AG04450 (cell line): ENCODE measurements at regions of chr4 and their contacts with region 1.

Region 1: DNA sequence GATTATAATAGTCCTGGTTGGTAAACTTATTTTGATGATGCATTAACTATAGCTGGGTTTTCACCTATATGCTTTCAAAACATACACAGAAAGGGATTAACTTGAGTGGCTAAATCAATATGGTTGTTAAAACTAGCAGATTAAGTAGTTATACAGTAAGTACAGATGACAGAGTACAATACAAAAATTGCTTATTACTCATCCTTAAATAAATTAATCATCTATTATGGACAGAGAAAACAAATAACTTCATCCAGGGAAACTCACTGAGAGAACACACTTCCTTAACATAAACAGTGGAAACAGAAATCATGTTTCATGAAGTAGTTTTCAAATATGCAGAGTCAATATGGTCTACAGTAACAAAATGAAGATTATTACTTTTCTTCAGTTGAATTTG is 133.4 kb downstream of the AREG start:
- DNase-seq: no peak
- H3K4me3 ChIP-seq: no peak overlapping the region
- H3K27ac ChIP-seq: no peak overlapping the region
- H3K27me3 ChIP-seq: no peaks in the 10 kb centered on the region
- CTCF ChIP-seq: no peak

Region 2: DNA sequence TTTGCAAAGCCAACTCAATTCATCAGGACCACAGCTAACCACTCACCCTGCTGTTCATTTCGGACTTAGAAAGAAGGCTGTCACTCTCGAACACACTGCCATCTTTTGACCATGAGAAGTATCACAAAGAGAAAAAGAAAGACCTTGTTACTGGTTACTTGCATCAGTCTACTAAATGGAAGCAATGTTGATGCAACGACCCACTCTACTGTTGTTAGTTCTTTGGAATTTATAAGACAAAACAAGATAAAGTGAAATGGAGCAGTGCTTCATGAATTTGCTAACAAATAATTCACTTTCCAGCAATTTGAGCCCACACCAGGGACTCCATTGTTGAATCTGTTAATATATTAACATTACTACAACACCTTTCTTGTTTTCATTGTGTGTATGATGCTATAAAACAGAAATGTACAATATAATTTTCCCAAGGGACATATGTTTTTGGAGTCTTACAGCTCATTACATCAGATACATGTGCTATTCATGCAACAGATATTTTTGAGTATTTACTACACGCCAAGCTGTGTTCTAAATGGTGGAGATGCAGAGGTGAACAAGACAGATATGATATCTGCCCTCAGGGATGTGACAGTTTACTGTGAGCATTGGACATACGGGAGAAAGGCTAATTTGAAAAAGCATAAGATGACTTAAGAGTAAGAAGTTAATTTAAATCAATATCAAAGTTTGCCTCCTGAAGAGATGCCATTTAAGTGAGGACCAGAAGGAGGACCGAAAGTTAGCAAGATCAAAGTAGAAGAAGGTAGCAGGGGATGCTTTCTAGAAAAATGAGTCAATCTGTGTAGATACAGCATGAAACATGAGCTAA is 46.1 kb before region 1 on chr4:
- CTCF ChIA-PET with region 1: interaction called, 10 read pairs
- POLR2A ChIA-PET with region 1: no interaction called
- DNase-seq: peak; percentile 59
- H3K4me3 ChIP-seq: no peak overlapping the region
- H3K27ac ChIP-seq: no peak overlapping the region
- H3K27me3 ChIP-seq: no peaks in the 10 kb centered on the region
- CTCF ChIP-seq: peak; percentile 64

Region 3: GRCh38 chr4:74796631-74797030 is 218.3 kb after region 1 on chr4:
- CTCF ChIA-PET with region 1: no interaction called
- POLR2A ChIA-PET with region 1: no interaction called
- DNase-seq: no peak
- H3K4me3 ChIP-seq: no peak overlapping the region
- H3K27ac ChIP-seq: no peak overlapping the region
- H3K27me3 ChIP-seq: peaks cover 32% of the 10 kb centered on the region
- CTCF ChIP-seq: no peak